Sciatic nerve (tissue), 2 donors: ENCODE measurements at regions of chr6 and their contacts with region 1.

Region 1: DNA sequence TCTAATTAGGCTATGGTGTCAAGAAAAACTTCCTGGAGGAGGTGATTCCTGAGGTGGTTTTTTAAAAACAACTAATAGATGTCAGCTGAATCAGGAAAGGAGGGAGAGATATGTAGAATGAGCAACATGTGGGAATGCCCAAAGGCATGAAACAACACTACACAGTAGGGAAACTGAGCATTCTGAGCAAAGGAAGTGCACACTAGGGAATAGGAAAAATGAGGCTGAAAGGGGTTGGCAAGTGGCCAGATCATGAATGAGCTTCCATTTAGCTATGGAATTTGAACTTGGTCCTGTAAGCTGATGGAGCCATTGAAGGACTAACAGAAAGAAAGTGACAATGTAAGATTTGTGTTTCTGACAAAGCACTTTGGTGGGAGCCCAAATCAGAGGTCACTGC is 16.9 kb upstream of the SLC35F1 start:
- DNase-seq: no peak
- ATAC-seq: no peak

Region 2: GRCh38 chr6:116424001-116424400 is 1466.2 kb before region 1 on chr6:
- intact Hi-C with region 1: no loop called
- DNase-seq: no peak
- ATAC-seq: no peak

Region 3: DNA sequence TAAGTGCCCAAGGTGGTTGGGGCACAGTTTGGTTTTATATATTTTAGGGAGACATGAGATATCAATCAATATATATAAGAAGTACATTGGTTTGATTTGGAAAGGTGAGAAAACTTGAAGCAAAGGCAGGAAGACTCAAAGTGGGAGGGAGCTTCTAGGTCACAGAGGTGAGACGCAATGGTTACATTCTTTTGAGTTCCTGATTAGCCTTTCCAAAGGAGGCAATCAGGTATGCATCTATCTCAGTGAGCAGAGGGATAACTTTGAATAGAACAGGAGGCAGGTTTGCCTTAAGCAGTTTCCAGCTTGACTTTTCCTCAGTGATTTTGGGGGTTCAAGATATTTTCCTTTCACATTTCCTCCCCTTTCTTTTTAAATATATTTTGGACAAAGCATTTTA is 41.1 kb before region 1 on chr6:
- intact Hi-C with region 1: no loop called
- DNase-seq: no peak
- ATAC-seq: no peak

Region 4: DNA sequence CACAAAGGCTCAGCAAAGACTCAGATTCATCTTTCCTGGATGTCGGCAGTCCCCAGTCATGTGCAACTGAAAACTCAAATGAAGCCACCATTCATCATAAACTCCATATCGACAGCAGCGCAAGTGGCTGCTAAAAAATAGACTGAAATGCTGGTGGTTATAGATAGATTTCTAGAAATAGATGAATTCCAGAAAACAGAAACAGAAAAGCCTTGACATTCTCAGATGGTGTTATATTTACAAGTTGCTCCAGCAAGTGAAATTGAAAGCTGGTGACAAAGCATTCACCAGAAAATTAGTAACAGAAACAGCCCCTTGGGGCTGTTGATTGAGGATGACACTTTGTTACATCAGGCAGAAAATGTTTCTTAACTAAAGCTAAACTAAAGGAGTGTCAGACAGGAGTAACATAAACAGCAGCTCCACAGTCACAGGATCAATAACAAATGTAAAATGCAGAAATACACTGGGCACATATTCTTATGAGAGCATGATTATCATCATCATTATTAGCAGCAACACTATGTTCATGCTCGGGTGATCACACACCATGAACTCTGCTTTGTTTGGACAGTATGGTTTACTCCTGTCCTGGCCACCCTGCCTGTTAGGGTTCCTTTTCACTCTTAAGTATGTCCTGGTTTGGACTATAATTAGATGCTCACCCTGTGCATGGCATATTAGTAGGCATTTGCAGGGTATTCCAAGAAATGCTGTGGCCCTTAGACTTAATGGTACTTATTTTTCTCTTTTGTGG is 19.5 kb before region 1 on chr6:
- intact Hi-C with region 1: loop called (anchors 1 kb)
- DNase-seq: no peak
- ATAC-seq: no peak